A549 (cell line): ENCODE measurements at regions of chr3 and their contacts with region 1.

Region 1: DNA sequence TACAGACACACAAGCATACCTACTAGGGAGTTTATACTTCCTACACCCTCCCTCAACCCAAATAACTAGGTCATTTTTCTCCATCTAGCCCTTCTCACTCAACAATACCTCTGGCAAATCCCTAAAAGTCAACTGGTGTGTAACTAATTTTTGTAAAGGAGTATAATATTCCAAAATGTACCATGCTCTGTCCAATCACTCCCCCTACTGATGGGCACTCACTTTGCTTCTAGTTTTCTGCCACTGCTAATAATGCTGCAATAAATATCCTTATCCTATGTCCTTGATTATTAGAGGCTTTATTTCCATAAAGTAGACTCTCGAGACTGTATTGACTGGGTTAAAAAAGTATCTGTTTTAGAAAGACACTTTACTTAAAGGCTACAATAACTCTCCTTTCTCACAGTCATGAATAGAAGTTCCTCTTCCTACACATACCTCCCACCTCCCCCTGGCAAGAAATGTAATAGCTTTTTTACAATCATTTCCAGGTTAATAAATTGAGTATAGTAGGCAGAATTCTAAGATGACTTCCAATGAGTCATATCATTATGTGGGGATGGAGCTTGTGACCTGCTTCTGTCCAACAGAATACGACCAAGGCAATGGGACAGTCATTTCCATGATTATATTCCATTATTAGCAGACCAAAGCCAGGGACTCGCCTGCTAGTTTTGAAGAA is 30.0 kb downstream of the SHQ1 start:
- DNase-seq: peak; percentile 13 to 21
- ATAC-seq: peak in 1 of 2 experiments; percentile 54; a peak in 2 of 6 replicates
- H3K4me3 ChIP-seq: no peak overlapping the region
- H3K27ac ChIP-seq: no peak overlapping the region
- H3K4me1 ChIP-seq: peaks cover 16% of the 10 kb centered on the region; the same call in 2 of the 3 replicates
- CTCF ChIP-seq: peak; percentile 63
- EP300 ChIP-seq: no peak
- POLR2A ChIP-seq: no peak
- RAD21 ChIP-seq: peak; percentile 78 to 80

Region 2: DNA sequence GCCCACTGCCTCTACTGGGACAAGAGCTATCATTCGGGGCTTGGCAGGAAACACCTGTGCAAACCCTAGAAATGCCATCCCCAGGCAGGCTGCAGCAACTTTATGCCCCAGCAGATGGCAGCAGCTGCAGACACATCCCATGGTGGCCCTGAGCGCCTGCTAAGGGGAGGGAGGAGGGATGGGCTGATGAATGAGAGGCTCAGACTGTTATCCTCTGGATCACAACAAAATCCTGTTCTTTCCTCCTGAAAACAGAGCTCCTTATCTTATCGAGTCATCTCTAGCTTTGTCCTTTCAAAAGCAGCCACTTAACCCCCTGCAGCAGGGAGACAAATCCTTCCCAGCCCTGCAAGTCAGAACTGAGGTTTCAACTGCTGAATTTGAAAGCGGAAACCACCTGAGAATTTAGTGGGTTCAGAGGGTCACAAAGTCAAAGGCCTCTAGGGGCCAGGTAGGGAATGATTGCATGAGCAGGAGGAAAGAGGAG is 942.7 kb before region 1 on chr3:
- CTCF ChIA-PET with region 1: interaction called, 157 read pairs
- POLR2A ChIA-PET with region 1: no interaction called
- DNase-seq: peak; percentile 63 to 67
- ATAC-seq: peak; percentile 97 to 99
- H3K4me3 ChIP-seq: no peak overlapping the region
- H3K27ac ChIP-seq: no peak overlapping the region
- H3K4me1 ChIP-seq: no peaks in the 10 kb centered on the region
- CTCF ChIP-seq: peak; percentile 76
- EP300 ChIP-seq: no peak
- POLR2A ChIP-seq: no peak
- RAD21 ChIP-seq: peak; percentile 83 to 87

Region 3: DNA sequence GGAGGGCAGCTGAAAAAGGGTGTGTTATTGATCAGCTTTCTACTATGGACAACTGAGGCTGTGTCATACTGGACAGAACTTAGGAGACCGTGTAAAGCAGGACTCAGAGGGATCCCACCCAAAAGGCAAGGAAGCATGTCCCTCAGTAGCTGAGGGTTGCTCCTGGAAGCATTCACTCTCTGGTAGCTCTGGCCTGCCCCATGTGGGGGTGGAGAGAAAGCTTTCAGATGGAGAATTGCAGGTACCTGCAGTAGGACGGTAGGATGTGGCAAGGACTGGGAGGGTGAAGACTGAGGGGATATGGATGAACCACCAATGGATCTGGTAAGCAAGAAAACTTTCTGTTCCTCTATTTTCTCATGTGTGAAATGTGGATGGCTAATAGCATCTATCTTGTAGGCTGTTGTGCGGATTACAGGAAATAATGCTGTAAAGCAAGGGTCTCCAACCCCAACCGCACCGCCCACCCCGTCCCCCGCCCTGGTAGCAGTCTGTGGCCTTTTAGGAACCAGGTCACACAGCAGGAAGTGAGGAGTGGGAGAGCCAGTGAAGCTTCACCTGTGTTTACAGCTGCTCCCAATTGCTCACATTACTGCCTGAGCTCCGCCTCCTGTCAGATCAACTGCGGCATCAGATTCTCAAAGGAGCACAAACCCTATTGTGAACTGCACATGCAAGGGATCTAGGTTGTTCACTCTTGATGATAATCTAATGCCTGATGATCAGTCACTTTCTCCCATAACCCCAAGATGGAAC is 875.6 kb before region 1 on chr3:
- CTCF ChIA-PET with region 1: interaction called, 11 read pairs
- POLR2A ChIA-PET with region 1: no interaction called
- DNase-seq: no peak
- ATAC-seq: no peak
- H3K4me3 ChIP-seq: no peak overlapping the region
- H3K27ac ChIP-seq: no peak overlapping the region
- H3K4me1 ChIP-seq: no peaks in the 10 kb centered on the region
- CTCF ChIP-seq: no peak
- EP300 ChIP-seq: no peak
- POLR2A ChIP-seq: no peak
- RAD21 ChIP-seq: no peak

Region 4: GRCh38 chr3:72665701-72666443 is 152.4 kb before region 1 on chr3:
- CTCF ChIA-PET with region 1: interaction called, 16 read pairs
- POLR2A ChIA-PET with region 1: no interaction called
- DNase-seq: peak; percentile 35 to 47
- ATAC-seq: peak; percentile 49 to 83; a peak in 3 of 6 replicates
- H3K4me3 ChIP-seq: no peak overlapping the region
- H3K27ac ChIP-seq: no peak overlapping the region
- H3K4me1 ChIP-seq: peaks cover 7% of the 10 kb centered on the region
- CTCF ChIP-seq: peak; percentile 58
- EP300 ChIP-seq: no peak
- POLR2A ChIP-seq: no peak
- RAD21 ChIP-seq: peak; percentile 51 to 55; a peak in 4 of 5 replicates

Region 5: GRCh38 chr3:72836923-72837322 is 18.7 kb after region 1 on chr3:
- CTCF ChIA-PET with region 1: interaction called, 21 read pairs
- POLR2A ChIA-PET with region 1: no interaction called
- DNase-seq: no peak
- ATAC-seq: no peak
- H3K4me3 ChIP-seq: no peak overlapping the region
- H3K27ac ChIP-seq: no peak overlapping the region
- H3K4me1 ChIP-seq: no peaks in the 10 kb centered on the region
- CTCF ChIP-seq: no peak
- EP300 ChIP-seq: no peak
- POLR2A ChIP-seq: no peak
- RAD21 ChIP-seq: no peak